CD8-positive, alpha-beta T cell (primary cell): ENCODE measurements at regions of chr9 and their contacts with region 1.

Region 1: GRCh38 chr9:71795097-71795813 is 26.9 kb upstream of the CEMIP2 start:
- DNase-seq: peak in 3 of 9 experiments; percentile 27 to 83 (median 64)
- ATAC-seq: peak; percentile 86
- H3K4me3 ChIP-seq: peak overlapping the region in 1 of 2 experiments; percentile 17
- H3K4me3 Mint-ChIP-seq: peak overlapping the region; percentile 53
- H3K27ac ChIP-seq: peak overlapping the region; percentile 52 to 82
- H3K27ac Mint-ChIP-seq: peak overlapping the region; percentile 96
- H3K4me1 ChIP-seq: peaks cover 58% of the 10 kb centered on the region
- H3K4me1 Mint-ChIP-seq: peaks cover 70% of the 10 kb centered on the region
- H3K27me3 ChIP-seq: no peaks in the 10 kb centered on the region
- H3K27me3 Mint-ChIP-seq: no peaks in the 10 kb centered on the region
- CTCF ChIP-seq: no peak

Region 2: GRCh38 chr9:71157731-71158130 is 637.5 kb before region 1 on chr9:
- CTCF ChIA-PET with region 1: no interaction called
- POLR2A ChIA-PET with region 1: no interaction called
- intact Hi-C with region 1: no loop called
- DNase-seq: no peak
- ATAC-seq: no peak
- H3K4me3 ChIP-seq: no peak overlapping the region
- H3K4me3 Mint-ChIP-seq: no peak overlapping the region
- H3K27ac ChIP-seq: no peak overlapping the region
- H3K27ac Mint-ChIP-seq: no peak overlapping the region
- H3K4me1 ChIP-seq: no peaks in the 10 kb centered on the region
- H3K4me1 Mint-ChIP-seq: no peaks in the 10 kb centered on the region
- H3K27me3 ChIP-seq: no peaks in the 10 kb centered on the region
- H3K27me3 Mint-ChIP-seq: no peaks in the 10 kb centered on the region
- CTCF ChIP-seq: no peak

Region 3: DNA sequence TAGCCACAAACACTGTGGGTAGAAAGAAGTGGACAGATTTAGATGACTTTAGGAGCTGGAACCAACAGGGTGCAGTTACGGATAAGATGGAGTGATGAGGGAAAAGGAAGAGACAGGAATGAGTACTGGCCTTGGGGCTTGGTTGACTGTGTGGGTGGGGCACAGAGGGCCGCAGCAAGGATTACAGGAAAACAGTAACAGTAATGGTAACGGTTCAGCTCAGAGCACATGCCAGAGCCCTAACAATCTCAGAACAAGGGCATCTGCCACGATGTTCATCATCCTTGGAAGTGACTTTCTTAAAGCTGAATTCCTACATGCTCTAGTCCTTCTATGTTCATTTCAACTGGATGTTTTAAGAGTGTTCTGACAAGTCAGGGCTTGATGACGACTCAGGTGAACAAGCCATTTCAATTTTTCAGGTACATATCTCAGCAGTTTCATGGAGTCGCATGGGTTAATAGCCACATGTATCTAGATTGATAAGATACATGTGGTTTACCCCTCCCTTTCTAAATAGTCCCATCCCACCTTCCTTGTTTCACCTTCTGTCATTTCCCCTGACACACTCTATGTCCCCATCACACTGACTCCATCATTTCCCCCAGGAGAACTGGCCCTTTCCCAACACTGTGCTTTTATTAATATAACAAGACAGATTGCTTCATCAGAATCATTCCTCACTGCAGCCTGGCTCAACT is 91.9 kb before region 1 on chr9:
- CTCF ChIA-PET with region 1: no interaction called
- POLR2A ChIA-PET with region 1: no interaction called
- intact Hi-C with region 1: no loop called
- DNase-seq: no peak
- ATAC-seq: no peak
- H3K4me3 ChIP-seq: no peak overlapping the region
- H3K4me3 Mint-ChIP-seq: no peak overlapping the region
- H3K27ac ChIP-seq: no peak overlapping the region
- H3K27ac Mint-ChIP-seq: peak overlapping the region; percentile 30
- H3K4me1 ChIP-seq: no peaks in the 10 kb centered on the region
- H3K4me1 Mint-ChIP-seq: peaks cover 2% of the 10 kb centered on the region
- H3K27me3 ChIP-seq: no peaks in the 10 kb centered on the region
- H3K27me3 Mint-ChIP-seq: no peaks in the 10 kb centered on the region
- CTCF ChIP-seq: no peak

Region 4: GRCh38 chr9:71748280-71748743 is 46.9 kb before region 1 on chr9:
- CTCF ChIA-PET with region 1: no interaction called
- POLR2A ChIA-PET with region 1: no interaction called
- intact Hi-C with region 1: no loop called
- DNase-seq: no peak
- ATAC-seq: no peak
- H3K4me3 ChIP-seq: no peak overlapping the region
- H3K4me3 Mint-ChIP-seq: no peak overlapping the region
- H3K27ac ChIP-seq: no peak overlapping the region
- H3K27ac Mint-ChIP-seq: no peak overlapping the region
- H3K4me1 ChIP-seq: peaks cover 8% of the 10 kb centered on the region
- H3K4me1 Mint-ChIP-seq: peaks cover 33% of the 10 kb centered on the region
- H3K27me3 ChIP-seq: no peaks in the 10 kb centered on the region
- H3K27me3 Mint-ChIP-seq: no peaks in the 10 kb centered on the region
- CTCF ChIP-seq: no peak

Region 5: DNA sequence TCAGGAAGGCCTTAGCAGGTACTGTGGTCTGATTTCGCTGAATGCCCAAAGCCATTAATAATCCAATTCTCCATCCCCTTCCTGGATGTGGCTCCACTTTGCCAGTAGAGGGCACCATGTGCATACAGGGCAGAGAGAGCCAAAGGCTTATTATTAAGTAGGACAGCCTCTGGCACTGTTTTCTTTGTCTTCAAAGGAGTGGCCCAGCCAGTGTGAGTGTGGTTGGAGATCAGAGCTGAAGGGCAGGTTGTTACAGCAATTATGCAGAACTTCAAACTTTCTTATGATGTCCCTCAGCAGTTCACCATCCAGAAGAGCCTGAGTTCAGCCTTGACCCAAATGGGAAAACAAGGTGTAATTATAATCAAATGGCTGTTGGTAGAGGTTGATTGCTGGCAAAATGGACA is 11.6 kb after region 1 on chr9:
- CTCF ChIA-PET with region 1: interaction called, 33 read pairs
- POLR2A ChIA-PET with region 1: interaction called, 18 read pairs
- intact Hi-C with region 1: loop called in 1 of 2 experiments (anchors 2 kb)
- DNase-seq: peak; percentile 12 to 80 (median 62)
- ATAC-seq: peak; percentile 96
- H3K4me3 ChIP-seq: no peak overlapping the region
- H3K4me3 Mint-ChIP-seq: no peak overlapping the region
- H3K27ac ChIP-seq: no peak overlapping the region
- H3K27ac Mint-ChIP-seq: peak overlapping the region; percentile 27
- H3K4me1 ChIP-seq: peaks cover 6% of the 10 kb centered on the region
- H3K4me1 Mint-ChIP-seq: peaks cover 15% of the 10 kb centered on the region
- H3K27me3 ChIP-seq: no peaks in the 10 kb centered on the region
- H3K27me3 Mint-ChIP-seq: no peaks in the 10 kb centered on the region
- CTCF ChIP-seq: peak; percentile 91

Region 6: GRCh38 chr9:71812385-71812784 is 17.1 kb after region 1 on chr9:
- CTCF ChIA-PET with region 1: interaction called, 149 read pairs
- POLR2A ChIA-PET with region 1: interaction called, 18 read pairs
- intact Hi-C with region 1: loop called in 1 of 2 experiments (anchors 2 kb)
- DNase-seq: no peak
- ATAC-seq: no peak
- H3K4me3 ChIP-seq: no peak overlapping the region
- H3K4me3 Mint-ChIP-seq: no peak overlapping the region
- H3K27ac ChIP-seq: no peak overlapping the region
- H3K27ac Mint-ChIP-seq: no peak overlapping the region
- H3K4me1 ChIP-seq: peaks cover 6% of the 10 kb centered on the region
- H3K4me1 Mint-ChIP-seq: peaks cover 20% of the 10 kb centered on the region
- H3K27me3 ChIP-seq: no peaks in the 10 kb centered on the region
- H3K27me3 Mint-ChIP-seq: no peaks in the 10 kb centered on the region
- CTCF ChIP-seq: no peak